ENCODE measurements at regions of chr18 and their contacts with region 1.

Region 1: GRCh38 chr18:35497370-35498197 is at the start of gene INO80C:
- DNase-seq: peak; percentile 92
- H3K4me3 Mint-ChIP-seq: peak within 1 kb of the TSS; percentile 92
- H3K27ac Mint-ChIP-seq: peak within 1 kb of the TSS; percentile 98
- H3K4me1 Mint-ChIP-seq: peaks cover 44% of the 10 kb centered on the region
- H3K27me3 Mint-ChIP-seq: no peaks in the 10 kb centered on the region
- total RNA-seq, gene INO80C: 35.2 and 43.7 TPM in 2 replicates

Region 2: GRCh38 chr18:34976899-34977837 is 520.4 kb before region 1 on chr18:
- intact Hi-C with region 1: loop called (anchors 5 kb)
- DNase-seq: peak; percentile 55
- H3K4me3 Mint-ChIP-seq: peak overlapping the region; percentile 78
- H3K27ac Mint-ChIP-seq: no peak overlapping the region
- H3K4me1 Mint-ChIP-seq: peaks cover 25% of the 10 kb centered on the region
- H3K27me3 Mint-ChIP-seq: peaks cover 31% of the 10 kb centered on the region

Region 3: DNA sequence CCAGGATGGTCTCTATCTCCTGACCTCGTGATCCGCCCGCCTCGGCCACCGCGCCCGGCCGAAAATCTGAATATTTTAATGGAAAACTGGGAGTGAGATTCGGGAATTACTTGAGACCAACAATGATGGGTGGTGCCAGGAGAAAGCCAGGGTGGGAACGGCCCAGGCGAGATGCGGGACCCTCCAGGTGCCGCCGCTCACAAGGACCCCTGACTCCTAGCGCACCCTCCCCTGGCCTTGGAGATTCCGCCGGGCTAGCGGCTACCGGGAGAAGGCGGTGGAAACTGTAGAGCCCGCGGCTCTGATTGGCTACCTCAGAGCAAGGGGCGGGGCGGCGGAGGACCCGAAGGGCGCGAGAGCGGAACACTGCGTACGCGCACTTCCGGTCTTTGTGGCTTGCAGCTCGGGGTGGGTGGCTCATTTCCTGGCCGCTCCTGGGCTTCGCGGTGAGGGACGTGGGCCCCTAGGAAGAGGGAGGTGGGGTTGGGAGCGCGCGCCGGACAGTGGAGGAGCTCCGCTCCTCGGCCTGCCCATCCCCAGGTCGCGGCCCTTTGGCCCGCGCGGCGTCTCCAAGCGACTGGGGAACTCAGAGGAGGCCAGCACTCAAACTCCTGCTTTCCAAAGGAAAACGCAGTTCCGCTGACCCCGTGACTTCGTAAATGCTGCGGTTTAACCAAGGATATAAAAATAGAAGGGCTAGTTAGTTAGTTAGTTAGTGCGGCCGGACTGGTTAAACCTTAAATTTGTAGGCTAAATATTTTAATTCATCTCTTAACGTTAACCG is 256.7 kb before region 1 on chr18 and contains the start of gene ZNF397:
- intact Hi-C with region 1: loop called (anchors 1 kb)
- DNase-seq: peak; percentile 95
- H3K4me3 Mint-ChIP-seq: peak within 1 kb of the TSS; percentile 97
- H3K27ac Mint-ChIP-seq: peak within 1 kb of the TSS; percentile 97
- H3K4me1 Mint-ChIP-seq: peaks cover 12% of the 10 kb centered on the region
- H3K27me3 Mint-ChIP-seq: no peaks in the 10 kb centered on the region
- total RNA-seq, gene ZNF397: 18.8 and 21.0 TPM in 2 replicates

Region 4: GRCh38 chr18:35415511-35416073 is 82.0 kb before region 1 on chr18:
- intact Hi-C with region 1: loop called (anchors 1 kb)
- DNase-seq: no peak
- H3K4me3 Mint-ChIP-seq: peak overlapping the region; percentile 29
- H3K27ac Mint-ChIP-seq: peak overlapping the region; percentile 25
- H3K4me1 Mint-ChIP-seq: peaks cover 32% of the 10 kb centered on the region
- H3K27me3 Mint-ChIP-seq: no peaks in the 10 kb centered on the region

Region 5: GRCh38 chr18:35580701-35581539 is 83.3 kb after region 1 on chr18:
- intact Hi-C with region 1: loop called (anchors 2 kb)
- DNase-seq: peak; percentile 44
- H3K4me3 Mint-ChIP-seq: peak overlapping the region; percentile 76
- H3K27ac Mint-ChIP-seq: no peak overlapping the region
- H3K4me1 Mint-ChIP-seq: peaks cover 33% of the 10 kb centered on the region
- H3K27me3 Mint-ChIP-seq: peaks cover 3% of the 10 kb centered on the region

Region 6: GRCh38 chr18:35842536-35842935 is 345.0 kb after region 1 on chr18:
- intact Hi-C with region 1: no loop called
- DNase-seq: no peak
- H3K4me3 Mint-ChIP-seq: no peak overlapping the region
- H3K27ac Mint-ChIP-seq: no peak overlapping the region
- H3K4me1 Mint-ChIP-seq: no peaks in the 10 kb centered on the region
- H3K27me3 Mint-ChIP-seq: peaks cover 3% of the 10 kb centered on the region

Region 7: DNA sequence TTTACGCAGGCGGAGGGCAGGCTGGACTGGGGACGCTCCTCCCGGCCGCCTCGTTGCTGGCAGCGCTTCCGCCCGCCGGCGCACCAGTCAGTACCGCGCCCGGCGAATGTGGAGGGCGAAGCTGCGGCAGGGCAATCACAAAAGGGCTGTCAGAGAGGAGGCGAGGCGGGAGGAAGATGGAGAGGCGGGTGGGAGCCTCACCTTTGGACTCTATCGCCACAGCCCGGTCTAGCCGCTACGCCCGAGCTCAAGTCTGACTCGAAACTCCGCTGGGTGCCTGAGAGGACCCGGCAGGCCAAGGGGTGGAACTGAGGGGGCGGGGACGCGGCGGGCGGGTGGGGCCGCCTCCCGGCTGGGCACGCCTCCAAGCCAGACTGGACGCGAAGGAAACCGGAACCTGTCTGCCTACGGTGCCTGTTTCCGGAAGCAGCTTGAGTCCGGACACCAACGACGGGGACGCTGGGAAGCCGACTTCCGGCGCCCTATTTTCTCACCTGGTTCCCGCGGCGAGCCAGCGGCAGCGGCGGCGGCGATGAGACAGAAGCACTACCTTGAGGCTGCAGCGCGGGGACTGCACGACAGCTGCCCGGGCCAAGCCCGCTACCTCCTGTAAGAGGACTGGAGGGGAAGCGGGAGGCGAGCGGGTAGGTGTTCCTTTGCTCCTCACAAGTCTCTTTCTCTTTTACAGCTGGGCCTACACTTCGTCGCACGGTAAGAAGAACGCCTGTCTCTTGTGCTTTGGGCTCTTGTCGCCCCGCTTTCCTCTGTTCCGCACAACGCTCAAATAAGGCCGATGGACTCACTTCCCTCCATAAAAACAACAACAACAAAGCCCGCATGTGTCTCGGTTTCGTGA is 474.8 kb after region 1 on chr18 and contains the start of gene RMP24:
- intact Hi-C with region 1: loop called (anchors 1 kb)
- DNase-seq: peak; percentile 90
- H3K4me3 Mint-ChIP-seq: peak within 1 kb of the TSS; percentile 98
- H3K27ac Mint-ChIP-seq: peak within 1 kb of the TSS; percentile 98
- H3K4me1 Mint-ChIP-seq: peaks cover 53% of the 10 kb centered on the region
- H3K27me3 Mint-ChIP-seq: no peaks in the 10 kb centered on the region

Region 8: GRCh38 chr18:36828630-36829361 is 1331.2 kb after region 1 on chr18 and contains the starts of genes KIAA1328 and TPGS2:
- intact Hi-C with region 1: loop called (anchors 2 kb)
- DNase-seq: peak; percentile 88
- H3K4me3 Mint-ChIP-seq: peak within 1 kb of the TSS; percentile 86
- H3K27ac Mint-ChIP-seq: peak within 1 kb of the TSS; percentile 94
- H3K4me1 Mint-ChIP-seq: peaks cover 51% of the 10 kb centered on the region
- H3K27me3 Mint-ChIP-seq: no peaks in the 10 kb centered on the region
- total RNA-seq, gene KIAA1328: 6.7 and 8.2 TPM in 2 replicates
- total RNA-seq, gene TPGS2: 68.5 and 72.6 TPM in 2 replicates